Esophagus muscularis mucosa (tissue), 4 donors: ENCODE measurements at regions of chr20 and their contacts with region 1.

Region 1: DNA sequence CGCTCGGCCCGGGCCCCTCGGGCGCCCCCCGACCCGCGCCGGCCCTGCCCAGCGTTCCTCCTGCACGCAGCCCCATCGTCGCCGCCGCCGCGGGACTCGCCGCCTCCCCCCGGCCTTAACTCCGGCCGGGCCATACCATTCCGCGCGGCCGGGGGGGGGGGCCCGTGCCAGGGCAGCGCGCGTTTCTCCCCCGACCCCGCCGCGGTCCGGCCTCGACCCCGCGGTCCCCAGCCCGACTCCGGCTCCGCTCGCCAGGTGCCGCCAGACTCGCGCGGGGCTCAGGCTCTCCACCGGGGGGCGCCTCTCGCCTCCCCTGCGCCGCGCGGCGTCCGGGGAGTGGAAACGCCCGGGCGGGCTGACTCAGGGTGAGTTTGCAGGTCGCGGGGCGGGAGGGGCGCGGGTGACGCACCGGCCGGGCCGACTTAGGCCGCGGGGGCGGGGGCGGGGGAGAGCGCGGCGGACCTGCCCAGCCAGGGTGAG is at the start of gene SRXN1:
- DNase-seq: peak; percentile 96
- H3K4me3 ChIP-seq: peak within 1 kb of the TSS; percentile 77 to 95 (median 84)
- H3K27ac ChIP-seq: peak within 1 kb of the TSS; percentile 81 to 90 (median 88)
- H3K4me1 ChIP-seq: peaks cover 18 to 36% (median 28%) of the 10 kb centered on the region in 4 donors
- H3K27me3 ChIP-seq: peaks cover 0 to 2% (median 0%) of the 10 kb centered on the region in 4 donors
- CTCF ChIP-seq: peak; percentile 54 to 58 (median 56)
- EP300 ChIP-seq: no peak
- POLR2A ChIP-seq: no peak
- total RNA-seq, gene SRXN1: 37.0 to 58.2 (median 41.4) TPM

Region 2: DNA sequence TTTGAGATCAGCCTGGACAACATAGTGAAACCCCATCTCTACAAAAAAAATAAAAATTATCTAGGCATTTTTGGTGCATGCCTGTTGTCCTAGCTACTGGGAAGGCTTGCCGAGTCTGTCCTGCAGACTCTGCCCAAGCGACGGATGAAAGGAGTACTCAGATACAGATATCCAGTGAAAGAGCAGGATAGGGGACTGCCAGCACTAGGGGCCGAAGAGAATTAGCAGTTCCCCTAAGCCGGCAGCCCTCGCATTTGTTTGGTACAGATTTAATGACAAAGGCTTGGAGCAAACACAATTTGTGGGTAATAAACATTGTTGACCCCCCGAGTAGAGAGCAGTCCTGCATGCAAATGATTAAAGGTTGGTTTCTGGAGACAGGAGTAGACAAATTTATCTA is 185.4 kb before region 1 on chr20:
- intact Hi-C with region 1: no loop called
- DNase-seq: no peak
- H3K4me3 ChIP-seq: no peak overlapping the region
- H3K27ac ChIP-seq: no peak overlapping the region
- H3K4me1 ChIP-seq: peaks cover 0 to 5% (median 4%) of the 10 kb centered on the region in 4 donors
- H3K27me3 ChIP-seq: peaks cover 0 to 14% (median 0%) of the 10 kb centered on the region in 4 donors
- CTCF ChIP-seq: no peak
- EP300 ChIP-seq: no peak
- POLR2A ChIP-seq: no peak

Region 3: DNA sequence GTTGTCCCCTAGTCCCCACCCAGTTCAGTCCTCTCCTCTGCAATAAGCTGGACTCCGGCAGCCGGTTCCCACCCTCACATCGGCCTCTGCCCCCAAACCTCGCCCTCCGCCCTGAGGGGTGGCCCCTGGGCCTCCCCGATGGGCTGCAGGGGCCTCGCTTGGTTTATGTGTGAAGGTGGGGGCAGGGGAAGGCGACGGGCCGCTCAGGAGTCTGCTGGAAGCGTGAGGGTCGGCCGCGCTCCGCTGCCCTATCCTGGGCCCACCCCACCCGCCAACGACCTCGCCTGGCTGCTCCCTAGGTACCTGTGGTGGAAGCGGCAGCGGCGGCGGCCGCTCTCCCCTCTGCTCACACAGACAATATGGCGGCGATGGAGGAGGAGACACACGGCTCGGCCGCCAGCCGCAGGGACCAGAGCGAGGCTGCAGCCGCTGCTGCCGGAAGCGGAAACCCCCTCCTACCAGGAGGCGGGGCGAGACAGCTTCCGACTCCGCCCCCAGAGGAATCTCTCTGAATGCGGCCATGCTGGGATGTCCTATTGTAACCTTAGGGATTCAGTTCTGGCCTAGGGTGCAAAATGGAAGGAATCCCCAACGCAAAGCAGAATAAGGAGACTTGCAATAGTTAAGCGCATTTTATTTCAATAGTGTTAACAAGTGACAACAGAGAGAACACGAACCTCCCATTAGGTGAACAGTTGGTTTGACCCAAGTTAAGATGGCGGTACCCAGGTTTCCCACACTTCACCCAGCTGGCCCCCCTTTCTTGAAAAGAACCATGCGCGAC is 109.6 kb before region 1 on chr20 and contains the start of gene CSNK2A1:
- intact Hi-C with region 1: loop called (anchors 5 kb)
- DNase-seq: peak; percentile 98
- H3K4me3 ChIP-seq: peak within 1 kb of the TSS; percentile 80 to 98 (median 89)
- H3K27ac ChIP-seq: peak within 1 kb of the TSS; percentile 84 to 94 (median 86)
- H3K4me1 ChIP-seq: peaks cover 31 to 43% (median 39%) of the 10 kb centered on the region in 4 donors
- H3K27me3 ChIP-seq: no peaks in the 10 kb centered on the region
- CTCF ChIP-seq: no peak
- EP300 ChIP-seq: no peak
- POLR2A ChIP-seq: no peak
- total RNA-seq, gene CSNK2A1: 41.5 to 69.5 (median 53.6) TPM

Region 4: GRCh38 chr20:805713-806112 is 152.6 kb after region 1 on chr20:
- intact Hi-C with region 1: no loop called
- DNase-seq: no peak
- H3K4me3 ChIP-seq: no peak overlapping the region
- H3K27ac ChIP-seq: no peak overlapping the region
- H3K4me1 ChIP-seq: no peaks in the 10 kb centered on the region
- H3K27me3 ChIP-seq: peaks cover 0 to 31% (median 0%) of the 10 kb centered on the region in 4 donors
- CTCF ChIP-seq: no peak
- EP300 ChIP-seq: no peak
- POLR2A ChIP-seq: no peak

Region 5: GRCh38 chr20:833450-834150 is 180.4 kb after region 1 on chr20 and contains the start of gene FAM110A:
- intact Hi-C with region 1: loop called (anchors 5 kb)
- DNase-seq: peak; percentile 99
- H3K4me3 ChIP-seq: peak within 1 kb of the TSS; percentile 73 to 94 (median 84)
- H3K27ac ChIP-seq: peak within 1 kb of the TSS; percentile 67 to 79 (median 74)
- H3K4me1 ChIP-seq: peaks cover 17 to 29% (median 26%) of the 10 kb centered on the region in 4 donors
- H3K27me3 ChIP-seq: no peaks in the 10 kb centered on the region
- CTCF ChIP-seq: no peak
- EP300 ChIP-seq: no peak
- POLR2A ChIP-seq: no peak
- total RNA-seq, gene FAM110A: 2.0 to 4.4 (median 3.2) TPM

Region 6: DNA sequence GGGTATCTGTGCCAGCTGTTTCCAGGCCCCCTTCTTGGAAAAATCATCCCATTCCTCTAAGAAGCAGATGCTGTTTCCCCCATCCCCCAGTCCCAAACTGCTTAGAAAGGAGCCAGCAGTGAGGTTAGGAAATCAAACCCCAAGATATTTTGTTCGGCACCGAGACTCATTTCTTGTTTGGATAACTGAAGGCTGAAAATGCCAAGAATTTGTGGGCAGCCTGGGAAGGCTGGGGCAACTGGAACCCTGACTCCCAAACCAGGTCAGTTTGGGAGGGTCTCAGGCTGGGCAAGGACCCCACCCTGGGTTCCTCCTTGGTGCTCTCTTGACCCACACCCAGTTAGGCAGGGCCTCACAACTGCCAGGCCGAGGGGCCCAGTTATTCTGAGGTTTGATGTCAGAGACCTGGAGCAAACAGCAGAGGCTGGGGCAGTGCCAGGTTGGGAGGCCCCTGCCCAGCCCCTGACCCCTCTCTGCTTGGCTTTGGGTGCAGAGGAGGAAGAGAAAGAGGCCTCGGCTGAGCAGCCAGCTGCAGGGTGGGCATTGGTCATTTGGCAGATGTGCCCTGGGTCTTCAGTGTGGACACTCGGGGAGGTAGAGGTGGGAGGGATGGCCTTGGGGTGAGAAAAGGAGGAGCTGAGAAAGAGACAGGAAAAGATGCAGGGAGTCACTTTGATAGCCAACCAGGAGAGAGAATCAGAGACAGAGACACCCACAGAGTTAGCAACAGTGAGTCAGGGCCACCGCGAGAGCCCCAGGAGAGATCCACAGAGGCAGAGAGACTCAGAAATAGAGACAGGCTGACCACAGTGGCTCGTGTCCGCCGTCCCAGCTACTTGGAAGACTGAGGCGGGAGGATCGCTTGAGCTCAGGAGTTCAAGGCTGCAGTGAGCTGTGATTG is 258.0 kb after region 1 on chr20:
- intact Hi-C with region 1: no loop called
- DNase-seq: no peak
- H3K4me3 ChIP-seq: no peak overlapping the region
- H3K27ac ChIP-seq: peak overlapping the region in 1 of 4 donors; percentile 31
- H3K4me1 ChIP-seq: peaks cover 0 to 9% (median 1%) of the 10 kb centered on the region in 4 donors
- H3K27me3 ChIP-seq: peaks cover 0 to 54% (median 3%) of the 10 kb centered on the region in 4 donors
- CTCF ChIP-seq: no peak
- EP300 ChIP-seq: no peak
- POLR2A ChIP-seq: no peak

Region 7: GRCh38 chr20:1010659-1011058 is 357.5 kb after region 1 on chr20:
- intact Hi-C with region 1: no loop called
- DNase-seq: no peak
- H3K4me3 ChIP-seq: no peak overlapping the region
- H3K27ac ChIP-seq: no peak overlapping the region
- H3K4me1 ChIP-seq: no peaks in the 10 kb centered on the region
- H3K27me3 ChIP-seq: peaks cover 0 to 9% (median 0%) of the 10 kb centered on the region in 4 donors
- CTCF ChIP-seq: no peak
- EP300 ChIP-seq: no peak
- POLR2A ChIP-seq: no peak